ENCODE measurements at regions of chr6 and their contacts with region 1.

Region 1: GRCh38 chr6:166989427-166990032 is 9.7 kb upstream of the CEP43 start:
- DNase-seq: peak; percentile 43
- ATAC-seq: peak; percentile 74
- H3K4me3 Mint-ChIP-seq: no peak overlapping the region
- H3K27ac Mint-ChIP-seq: no peak overlapping the region
- H3K4me1 Mint-ChIP-seq: peaks cover 22% of the 10 kb centered on the region
- H3K27me3 Mint-ChIP-seq: no peaks in the 10 kb centered on the region

Region 2: GRCh38 chr6:166950443-166950821 is 39.1 kb before region 1 on chr6:
- CTCF ChIA-PET with region 1: interaction called, 30 read pairs
- POLR2A ChIA-PET with region 1: no interaction called
- DNase-seq: no peak
- ATAC-seq: no peak
- H3K4me3 Mint-ChIP-seq: peak overlapping the region; percentile 19
- H3K27ac Mint-ChIP-seq: peak overlapping the region; percentile 89
- H3K4me1 Mint-ChIP-seq: peaks cover 53% of the 10 kb centered on the region
- H3K27me3 Mint-ChIP-seq: no peaks in the 10 kb centered on the region

Region 3: GRCh38 chr6:166956444-166957086 is 33.0 kb before region 1 on chr6 and contains the start of gene RNASET2:
- CTCF ChIA-PET with region 1: interaction called, 30 read pairs
- POLR2A ChIA-PET with region 1: interaction called, 6 read pairs
- DNase-seq: peak; percentile 98
- ATAC-seq: peak; percentile 85
- H3K4me3 Mint-ChIP-seq: peak within 1 kb of the TSS; percentile 82
- H3K27ac Mint-ChIP-seq: peak within 1 kb of the TSS; percentile 95
- H3K4me1 Mint-ChIP-seq: peaks cover 71% of the 10 kb centered on the region
- H3K27me3 Mint-ChIP-seq: no peaks in the 10 kb centered on the region
- total RNA-seq, gene RNASET2: 46.9 to 48.7 TPM

Region 4: DNA sequence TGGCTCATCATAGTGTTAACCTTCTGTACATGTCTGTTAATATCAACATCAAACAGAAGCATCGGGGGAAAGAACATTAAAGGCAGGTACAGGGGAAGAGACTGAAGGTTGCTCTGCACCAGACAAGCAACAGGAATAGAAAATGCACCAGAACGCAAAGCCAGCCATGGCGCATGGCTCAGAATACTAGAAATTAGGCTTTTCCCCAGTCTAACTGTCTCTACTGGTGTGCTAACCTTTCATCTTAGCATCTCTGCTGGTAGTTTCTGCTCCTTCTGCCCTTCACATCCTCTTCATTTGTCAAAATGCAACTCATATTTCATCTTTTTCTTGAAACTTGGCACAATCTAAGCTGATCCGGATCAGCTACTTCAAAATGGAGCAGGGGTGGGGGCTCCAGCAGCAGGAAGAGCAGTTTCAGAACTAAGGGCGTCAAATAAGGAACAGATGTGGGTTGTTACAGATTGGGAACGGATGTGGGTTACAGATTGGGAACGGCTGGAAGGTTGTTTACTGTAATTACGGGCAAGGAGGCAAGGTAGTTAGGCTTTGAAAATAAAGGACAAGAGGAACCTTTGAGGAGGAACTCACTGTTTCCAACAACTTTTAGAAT is 20.0 kb before region 1 on chr6:
- CTCF ChIA-PET with region 1: interaction called, 10 read pairs
- POLR2A ChIA-PET with region 1: no interaction called
- DNase-seq: no peak
- ATAC-seq: no peak
- H3K4me3 Mint-ChIP-seq: no peak overlapping the region
- H3K27ac Mint-ChIP-seq: peak overlapping the region; percentile 23
- H3K4me1 Mint-ChIP-seq: peaks cover 20% of the 10 kb centered on the region
- H3K27me3 Mint-ChIP-seq: no peaks in the 10 kb centered on the region

Region 5: GRCh38 chr6:167141667-167142432 is 152.3 kb after region 1 on chr6:
- CTCF ChIA-PET with region 1: interaction called, 11 read pairs
- POLR2A ChIA-PET with region 1: no interaction called
- DNase-seq: peak; percentile 54
- ATAC-seq: peak; percentile 90
- H3K4me3 Mint-ChIP-seq: no peak overlapping the region
- H3K27ac Mint-ChIP-seq: no peak overlapping the region
- H3K4me1 Mint-ChIP-seq: peaks cover 16% of the 10 kb centered on the region
- H3K27me3 Mint-ChIP-seq: peaks cover 9% of the 10 kb centered on the region

Measured in activated CD8-positive, alpha-beta T cell treated with anti-CD3 and anti-CD28 coated beads, Interleukin-2, amount 10 ng/mL, durations not matched to agents 7 days and 5 days (primary cell).